AG04449 (cell line): ENCODE measurements at regions of chr10 and their contacts with region 1.

Region 1: GRCh38 chr10:102583435-102584417 is 60.6 kb upstream of the TRIM8 start:
- DNase-seq: peak; percentile 49
- H3K4me3 ChIP-seq: no peak overlapping the region
- CTCF ChIP-seq: peak; percentile 81

Region 2: GRCh38 chr10:102444851-102445250 is 138.9 kb before region 1 on chr10:
- CTCF ChIA-PET with region 1: no interaction called
- POLR2A ChIA-PET with region 1: no interaction called
- DNase-seq: no peak
- H3K4me3 ChIP-seq: no peak overlapping the region
- CTCF ChIP-seq: no peak

Region 3: DNA sequence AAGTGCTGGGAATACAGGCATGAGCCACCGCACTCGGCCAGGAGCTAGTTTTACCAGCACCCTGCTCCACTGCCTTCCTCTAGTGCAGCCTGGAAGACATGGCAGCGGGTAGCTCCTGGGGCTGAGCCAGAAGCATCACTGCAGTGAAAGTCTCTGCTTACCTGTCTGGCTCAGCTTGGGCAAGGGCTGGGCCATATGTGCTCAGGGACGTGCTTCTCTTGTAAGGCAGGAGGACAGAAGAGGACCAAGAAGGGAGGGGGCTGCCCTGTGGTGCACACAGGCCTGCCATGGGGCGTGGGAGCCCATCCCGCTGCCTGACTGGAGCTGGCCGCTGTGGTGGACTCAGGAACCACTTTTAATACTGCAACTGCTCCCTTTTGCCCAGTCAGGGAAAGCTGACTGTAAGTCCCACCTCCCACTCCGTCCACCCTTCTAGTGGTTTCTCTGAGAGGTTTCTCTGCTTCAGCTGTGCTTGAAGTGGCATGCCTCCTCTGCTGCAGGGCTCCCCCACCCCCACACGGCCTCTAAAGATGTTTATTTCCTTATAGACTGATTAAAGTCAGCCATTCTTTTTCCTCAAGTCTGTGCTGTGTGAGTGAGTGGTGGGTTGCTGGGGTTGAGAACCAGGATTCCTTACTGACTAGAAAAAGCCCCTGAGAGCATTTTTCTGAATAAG is 107.1 kb before region 1 on chr10:
- CTCF ChIA-PET with region 1: interaction called, 32 read pairs
- POLR2A ChIA-PET with region 1: no interaction called
- DNase-seq: no peak
- H3K4me3 ChIP-seq: no peak overlapping the region
- CTCF ChIP-seq: no peak

Region 4: DNA sequence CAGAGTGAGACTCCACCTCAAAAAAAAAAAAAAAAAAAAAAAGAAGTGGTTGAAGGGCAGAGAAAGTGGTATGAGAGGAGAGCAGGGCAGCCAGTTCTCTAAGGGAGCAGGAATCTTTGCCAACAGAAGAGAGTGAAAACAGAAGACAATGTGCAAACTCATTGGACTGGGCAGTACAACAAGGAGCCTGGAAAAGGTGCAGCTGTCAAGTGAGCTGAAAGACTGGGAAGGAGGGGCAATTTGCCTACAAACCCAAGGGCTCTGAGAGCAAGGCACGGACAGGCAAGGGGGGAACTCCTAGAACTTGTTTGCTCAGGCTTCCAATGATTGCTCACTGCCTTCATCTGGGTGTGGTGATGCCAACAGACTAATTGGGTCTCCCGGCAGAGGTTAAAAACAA is 90.7 kb before region 1 on chr10:
- CTCF ChIA-PET with region 1: interaction called, 36 read pairs
- POLR2A ChIA-PET with region 1: no interaction called
- DNase-seq: no peak
- H3K4me3 ChIP-seq: no peak overlapping the region
- CTCF ChIP-seq: no peak

Region 5: GRCh38 chr10:102517553-102517952 is 66.2 kb before region 1 on chr10:
- CTCF ChIA-PET with region 1: interaction called, 16 read pairs
- POLR2A ChIA-PET with region 1: no interaction called
- DNase-seq: no peak
- H3K4me3 ChIP-seq: no peak overlapping the region
- CTCF ChIP-seq: no peak

Region 6: DNA sequence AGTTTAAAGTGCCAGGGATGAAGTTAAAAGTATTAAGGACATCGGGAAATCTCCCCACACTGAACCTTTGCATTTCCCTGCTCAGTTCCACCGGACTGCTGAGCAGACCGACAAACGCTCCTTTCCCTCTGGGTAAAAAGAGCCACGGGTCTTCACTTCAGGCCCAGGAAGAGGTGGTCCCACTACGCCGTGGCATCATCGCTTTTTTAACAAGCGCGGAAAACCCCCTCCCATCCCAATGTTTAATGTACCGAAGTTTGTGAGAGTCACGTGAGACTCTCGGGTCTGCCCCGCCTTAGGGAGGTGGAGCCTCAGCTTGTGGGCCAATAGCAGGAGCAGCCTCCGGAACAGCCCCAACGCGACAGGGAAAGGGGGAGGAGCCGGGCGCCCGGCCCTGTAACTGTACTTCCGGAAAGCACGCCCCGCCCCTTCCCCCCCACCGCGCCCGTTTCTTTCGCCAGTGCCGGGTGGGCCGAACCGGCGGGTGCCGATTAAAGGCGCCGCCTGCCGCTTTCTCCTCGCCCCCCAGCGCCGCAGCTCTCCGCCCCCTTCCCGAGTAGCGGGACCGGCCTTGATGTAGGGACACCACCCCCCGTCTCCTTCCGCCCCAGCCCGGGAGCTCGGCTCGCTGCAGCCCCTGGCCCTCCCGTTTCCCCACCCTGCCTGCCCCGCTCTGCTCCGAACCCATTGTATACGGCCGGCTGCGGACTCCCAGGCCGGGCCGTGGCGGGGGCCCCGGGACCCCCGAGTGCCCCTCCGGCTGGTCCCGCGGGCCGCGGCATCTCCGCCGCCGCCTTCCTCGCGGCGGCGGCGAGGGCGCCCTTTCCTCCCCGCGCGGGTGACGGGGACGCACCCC is 58.4 kb after region 1 on chr10:
- CTCF ChIA-PET with region 1: interaction called, 10 read pairs
- POLR2A ChIA-PET with region 1: no interaction called
- DNase-seq: peak; percentile 87
- H3K4me3 ChIP-seq: peak overlapping the region; percentile 91
- CTCF ChIP-seq: no peak

Region 7: DNA sequence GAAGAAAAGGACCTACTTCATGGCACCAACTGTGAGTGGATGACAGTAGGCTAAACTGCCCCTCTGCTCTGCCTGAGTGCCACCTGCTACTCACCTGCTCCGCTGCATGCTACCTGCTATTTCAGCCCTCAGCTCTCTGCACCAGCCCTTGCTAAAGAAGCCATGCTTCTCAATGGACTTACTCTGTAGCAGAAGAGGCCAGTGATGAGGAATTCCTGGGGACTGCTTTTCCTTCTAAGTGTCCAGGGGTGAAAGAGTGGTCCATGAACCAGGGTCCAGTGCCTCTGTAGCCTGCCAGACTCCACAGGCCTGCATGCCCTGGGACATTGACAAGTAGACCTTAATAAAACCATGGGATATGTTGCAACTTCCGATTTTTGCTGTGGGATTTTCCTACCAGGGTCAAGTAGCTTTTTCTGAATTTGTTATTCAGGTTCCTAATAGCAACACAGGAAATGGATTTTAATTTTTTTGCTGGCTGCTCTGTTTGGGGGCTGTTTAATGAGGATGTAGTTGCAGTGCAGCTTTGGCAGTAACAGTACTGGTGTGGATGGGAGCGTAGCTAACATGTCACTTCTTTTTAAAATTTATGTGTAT is 202.0 kb after region 1 on chr10:
- CTCF ChIA-PET with region 1: no interaction called
- POLR2A ChIA-PET with region 1: no interaction called
- DNase-seq: no peak
- H3K4me3 ChIP-seq: no peak overlapping the region
- CTCF ChIP-seq: no peak